ENCODE measurements at regions of chr7 and their contacts with region 1.

Region 1: GRCh38 chr7:131231381-131232220 is 96.1 kb upstream of the MKLN1 start:
- DNase-seq: no peak
- H3K4me3 ChIP-seq: no peak overlapping the region
- H3K27ac ChIP-seq: peak overlapping the region; percentile 33; the same call in 1 of the 2 replicates
- H3K4me1 ChIP-seq: peaks cover 21% of the 10 kb centered on the region
- H3K27me3 ChIP-seq: no peaks in the 10 kb centered on the region
- CTCF ChIP-seq: no peak

Region 2: DNA sequence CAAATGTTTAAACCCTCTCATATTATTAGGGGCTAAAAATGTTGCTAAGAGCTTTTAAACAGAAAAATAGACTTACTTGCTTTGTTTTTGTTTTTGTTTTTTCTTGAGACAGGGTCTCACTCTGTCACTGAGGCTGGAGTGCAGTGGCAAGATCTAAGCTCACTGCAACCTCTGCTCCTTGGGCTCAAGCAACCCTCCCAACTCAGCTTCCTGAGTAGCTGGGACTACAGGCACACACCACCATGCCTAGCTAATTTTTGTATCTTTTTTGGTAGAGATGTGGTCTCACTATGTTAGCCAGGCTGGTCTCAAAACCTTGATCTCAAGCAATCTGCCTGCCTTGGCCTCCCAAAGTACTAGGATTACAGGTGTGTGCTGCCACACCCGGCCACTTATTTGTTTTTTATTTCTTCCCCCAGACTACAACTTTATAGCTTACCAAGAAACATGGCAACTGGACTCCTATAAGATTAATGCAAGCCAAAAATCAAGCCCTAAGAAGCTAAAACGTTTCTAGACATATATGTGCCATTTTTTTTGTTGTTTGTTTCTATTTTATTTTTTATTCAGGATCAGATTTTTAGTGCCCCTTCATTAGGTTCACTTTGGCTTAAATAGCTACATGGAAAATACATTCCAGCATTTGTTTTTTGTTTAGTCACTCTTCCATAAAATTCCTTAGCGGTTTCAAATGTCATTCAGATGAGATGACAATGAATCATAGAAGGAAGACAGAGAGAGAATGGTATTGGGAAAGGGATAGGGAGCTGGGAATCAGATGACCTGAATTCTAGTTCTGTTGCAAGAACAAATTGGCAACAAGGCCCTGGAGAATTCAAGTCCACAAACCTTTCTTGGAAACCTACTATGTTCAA is 67.3 kb before region 1 on chr7:
- CTCF ChIA-PET with region 1: interaction called, 10 read pairs
- POLR2A ChIA-PET with region 1: no interaction called
- intact Hi-C with region 1: no loop called
- DNase-seq: peak; percentile 38 to 97
- H3K4me3 ChIP-seq: peak overlapping the region; percentile 32; the same call in 1 of the 2 replicates
- H3K27ac ChIP-seq: peak overlapping the region; percentile 95
- H3K4me1 ChIP-seq: peaks cover 44% of the 10 kb centered on the region
- H3K27me3 ChIP-seq: no peaks in the 10 kb centered on the region
- CTCF ChIP-seq: 0 out of 2 replicates have a peak, but pooled peaks have one; percentile 14

Region 3: GRCh38 chr7:131170440-131171105 is 61.0 kb before region 1 on chr7:
- CTCF ChIA-PET with region 1: interaction called, 10 read pairs
- POLR2A ChIA-PET with region 1: no interaction called
- intact Hi-C with region 1: loop called (anchors 1 kb)
- DNase-seq: no peak
- H3K4me3 ChIP-seq: no peak overlapping the region
- H3K27ac ChIP-seq: peak overlapping the region; percentile 26; the same call in 1 of the 2 replicates
- H3K4me1 ChIP-seq: peaks cover 48% of the 10 kb centered on the region
- H3K27me3 ChIP-seq: no peaks in the 10 kb centered on the region
- CTCF ChIP-seq: no peak

Region 4: DNA sequence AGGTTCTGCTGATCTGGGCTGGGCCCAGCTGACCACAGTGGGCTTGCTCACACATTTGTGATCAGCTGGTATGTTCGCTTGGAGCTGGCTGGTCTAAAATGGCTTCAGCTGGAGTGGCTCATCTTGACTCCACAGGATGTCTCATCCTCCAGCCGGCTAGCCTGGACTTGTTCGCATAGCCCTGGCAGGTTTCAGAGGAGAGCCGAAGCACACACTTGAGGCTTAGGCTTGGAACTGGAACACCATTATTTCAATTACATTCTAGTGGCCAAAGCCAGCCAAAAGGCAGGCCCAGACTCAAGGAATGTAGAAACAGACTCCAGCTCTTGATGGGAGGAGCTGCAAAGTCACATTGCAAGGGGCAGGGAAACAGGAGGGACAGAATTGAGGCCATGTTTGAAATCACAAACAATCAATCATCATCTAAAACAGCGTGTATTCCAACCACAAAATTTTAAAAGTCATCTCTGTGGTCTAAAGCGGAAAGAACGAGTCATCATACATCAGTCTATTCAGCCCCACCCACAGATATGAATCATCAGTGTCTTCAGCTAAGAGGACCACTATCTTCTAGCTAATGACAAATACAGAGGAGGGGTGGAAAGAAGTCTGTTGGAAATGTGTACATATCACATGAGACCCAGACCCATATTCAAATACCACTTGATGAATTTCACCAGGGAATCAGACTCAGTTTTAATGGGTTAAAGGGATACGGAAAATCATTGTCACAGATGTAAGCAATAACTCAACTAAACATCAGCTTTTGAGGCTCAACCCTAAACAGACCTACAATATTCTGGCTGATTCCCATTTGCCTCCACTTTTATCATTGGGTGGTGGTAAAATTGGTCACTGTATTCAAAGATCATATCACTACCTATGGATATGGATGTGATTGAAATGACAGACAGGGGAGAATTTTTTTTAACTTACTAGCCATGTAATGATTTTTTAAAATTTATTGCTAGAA is 42.9 kb before region 1 on chr7:
- CTCF ChIA-PET with region 1: no interaction called
- POLR2A ChIA-PET with region 1: no interaction called
- intact Hi-C with region 1: loop called (anchors 5 kb)
- DNase-seq: peak; percentile 70 to 97
- H3K4me3 ChIP-seq: peak overlapping the region; percentile 31; the same call in 1 of the 2 replicates
- H3K27ac ChIP-seq: peak overlapping the region; percentile 94
- H3K4me1 ChIP-seq: peaks cover 76% of the 10 kb centered on the region
- H3K27me3 ChIP-seq: no peaks in the 10 kb centered on the region
- CTCF ChIP-seq: no peak

Region 5: GRCh38 chr7:131249003-131249402 is 17.4 kb after region 1 on chr7:
- CTCF ChIA-PET with region 1: no interaction called
- POLR2A ChIA-PET with region 1: no interaction called
- intact Hi-C with region 1: loop called (anchors 1 kb)
- DNase-seq: peak; percentile 64 to 91
- H3K4me3 ChIP-seq: no peak overlapping the region
- H3K27ac ChIP-seq: 0 out of 2 replicates have a peak overlapping the region, but pooled peaks have one; percentile 8
- H3K4me1 ChIP-seq: peaks cover 15% of the 10 kb centered on the region
- H3K27me3 ChIP-seq: no peaks in the 10 kb centered on the region
- CTCF ChIP-seq: no peak

Region 6: DNA sequence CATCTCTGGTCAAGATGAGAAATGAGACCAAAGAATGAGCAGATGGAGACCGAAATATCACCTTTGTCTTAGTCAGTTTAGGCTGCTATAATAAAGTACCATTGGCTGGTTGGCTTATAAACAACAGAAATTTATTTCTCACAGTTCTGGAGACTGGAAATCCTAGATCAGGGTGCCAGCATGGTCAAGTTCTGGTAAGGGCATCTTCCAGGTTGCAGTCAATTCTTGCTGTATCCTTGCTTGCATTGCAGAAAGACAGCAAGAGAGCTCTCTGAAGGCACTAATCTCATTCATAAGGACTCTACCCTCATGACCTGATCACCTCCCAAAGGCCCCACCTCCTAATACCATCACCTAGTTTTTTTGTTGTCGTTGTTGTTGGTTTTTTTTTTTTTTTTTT is 43.4 kb after region 1 on chr7:
- CTCF ChIA-PET with region 1: no interaction called
- POLR2A ChIA-PET with region 1: no interaction called
- intact Hi-C with region 1: loop called (anchors 1 kb)
- DNase-seq: no peak
- H3K4me3 ChIP-seq: no peak overlapping the region
- H3K27ac ChIP-seq: no peak overlapping the region
- H3K4me1 ChIP-seq: no peaks in the 10 kb centered on the region
- H3K27me3 ChIP-seq: no peaks in the 10 kb centered on the region
- CTCF ChIP-seq: no peak

Measured in PC-9 (cell line).